ENCODE measurements at regions of chr17 and their contacts with region 1.

Region 1: GRCh38 chr17:78034429-78035091 is 76.1 kb downstream of the TNRC6C start:
- DNase-seq: no peak
- ATAC-seq: no peak
- H3K4me3 ChIP-seq: no peak overlapping the region
- H3K4me3 Mint-ChIP-seq: no peak overlapping the region
- H3K27ac ChIP-seq: no peak overlapping the region
- H3K27ac Mint-ChIP-seq: peak overlapping the region; percentile 32
- H3K4me1 ChIP-seq: no peaks in the 10 kb centered on the region
- H3K4me1 Mint-ChIP-seq: peaks cover 24% of the 10 kb centered on the region
- H3K27me3 ChIP-seq: no peaks in the 10 kb centered on the region
- H3K27me3 Mint-ChIP-seq: no peaks in the 10 kb centered on the region
- CTCF ChIP-seq: no peak

Region 2: GRCh38 chr17:78019367-78019975 is 15.1 kb before region 1 on chr17:
- CTCF ChIA-PET with region 1: interaction called, 10 read pairs
- POLR2A ChIA-PET with region 1: interaction called, 3 read pairs
- intact Hi-C with region 1: no loop called
- DNase-seq: peak in 2 of 9 experiments; percentile 43 to 56
- ATAC-seq: peak; percentile 40
- H3K4me3 ChIP-seq: no peak overlapping the region
- H3K4me3 Mint-ChIP-seq: no peak overlapping the region
- H3K27ac ChIP-seq: peak overlapping the region in 1 of 2 experiments; percentile 14
- H3K27ac Mint-ChIP-seq: peak overlapping the region; percentile 52
- H3K4me1 ChIP-seq: peaks cover 12% of the 10 kb centered on the region
- H3K4me1 Mint-ChIP-seq: peaks cover 33% of the 10 kb centered on the region
- H3K27me3 ChIP-seq: no peaks in the 10 kb centered on the region
- H3K27me3 Mint-ChIP-seq: no peaks in the 10 kb centered on the region
- CTCF ChIP-seq: peak; percentile 64

Region 3: DNA sequence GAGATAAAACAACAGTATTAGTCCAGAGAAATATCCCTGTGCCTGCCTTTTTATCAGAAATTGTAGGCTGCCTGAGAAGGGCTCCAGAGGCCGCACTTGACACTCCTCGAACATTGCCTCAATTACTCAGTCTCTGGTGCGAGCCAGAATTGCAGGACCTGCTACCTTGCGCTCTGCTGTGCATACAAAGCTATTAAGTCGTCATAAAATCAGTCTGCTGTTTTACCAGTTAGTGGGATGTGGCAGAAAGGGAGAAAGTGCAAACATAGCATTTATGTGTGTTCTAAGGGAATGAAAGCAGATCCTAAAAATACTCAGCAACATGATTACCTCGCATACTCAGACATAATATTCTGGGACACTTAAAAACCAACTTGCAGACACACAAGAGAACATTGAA is 23.4 kb after region 1 on chr17:
- CTCF ChIA-PET with region 1: no interaction called
- POLR2A ChIA-PET with region 1: no interaction called
- intact Hi-C with region 1: no loop called
- DNase-seq: no peak
- ATAC-seq: no peak
- H3K4me3 ChIP-seq: no peak overlapping the region
- H3K4me3 Mint-ChIP-seq: no peak overlapping the region
- H3K27ac ChIP-seq: no peak overlapping the region
- H3K27ac Mint-ChIP-seq: peak overlapping the region; percentile 29
- H3K4me1 ChIP-seq: no peaks in the 10 kb centered on the region
- H3K4me1 Mint-ChIP-seq: peaks cover 42% of the 10 kb centered on the region
- H3K27me3 ChIP-seq: no peaks in the 10 kb centered on the region
- H3K27me3 Mint-ChIP-seq: no peaks in the 10 kb centered on the region
- CTCF ChIP-seq: no peak

Measured in CD8-positive, alpha-beta T cell (primary cell).